ENCODE measurements at regions of chr3 and their contacts with region 1.

Region 1: DNA sequence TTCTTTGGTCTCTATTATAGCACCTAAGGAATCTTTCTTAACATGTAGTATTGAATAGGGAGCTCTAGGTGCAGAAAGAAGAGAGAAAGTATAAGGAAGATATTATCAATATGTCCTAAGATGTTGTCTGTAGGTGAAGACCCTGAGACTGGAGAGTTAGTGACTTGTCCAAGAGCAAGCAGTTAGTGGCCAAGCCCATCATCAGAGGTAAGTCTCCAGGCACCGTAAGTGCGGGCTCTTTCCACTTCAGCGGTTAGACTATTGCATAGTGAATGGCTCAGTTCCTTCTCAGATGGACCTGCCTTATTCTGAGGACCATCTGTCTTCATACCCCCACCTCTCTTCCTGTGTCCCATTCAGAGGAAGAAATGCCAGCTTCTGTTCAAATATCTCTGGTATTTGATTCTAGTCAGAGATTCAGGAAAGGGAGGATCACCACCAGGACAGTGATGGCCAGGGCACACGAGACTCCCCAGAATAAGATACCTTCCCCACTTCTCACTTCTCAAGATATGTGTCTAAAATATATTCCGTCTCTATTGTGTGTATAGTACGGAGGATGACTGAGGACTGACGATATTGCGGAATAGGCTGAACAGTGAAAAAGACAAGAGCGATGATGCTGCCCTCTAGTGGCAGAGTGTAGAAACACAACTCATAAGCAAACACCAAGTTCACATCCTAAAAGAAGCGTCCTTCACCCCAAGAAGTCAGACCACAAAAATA is 19.1 kb upstream of the ADGRG7 start:
- DNase-seq: peak; percentile 53
- H3K4me3 Mint-ChIP-seq: no peak overlapping the region
- H3K27ac Mint-ChIP-seq: no peak overlapping the region
- H3K4me1 Mint-ChIP-seq: peaks cover 9% of the 10 kb centered on the region
- H3K27me3 Mint-ChIP-seq: peaks cover 4% of the 10 kb centered on the region

Region 2: DNA sequence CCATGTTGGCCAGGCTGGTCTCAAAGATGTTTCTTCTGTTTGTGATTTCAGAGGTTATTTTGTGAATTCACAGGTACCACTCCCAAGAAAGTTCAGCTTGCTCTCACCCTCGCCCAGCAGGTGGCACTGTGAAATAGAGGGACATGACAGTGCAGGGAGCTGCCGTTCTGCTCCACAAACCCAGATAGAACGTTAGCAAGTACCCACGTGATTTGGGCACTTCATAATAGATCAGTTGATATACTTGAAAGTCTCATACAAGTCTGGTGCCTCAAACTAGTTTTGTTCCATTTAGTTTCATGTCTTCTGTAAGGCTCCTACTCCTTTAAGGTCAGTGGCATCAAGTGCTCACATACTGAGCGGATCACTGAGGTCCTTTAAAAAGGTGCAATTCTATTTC is 521.5 kb before region 1 on chr3:
- intact Hi-C with region 1: loop called (anchors 1 kb)
- DNase-seq: peak; percentile 73
- H3K4me3 Mint-ChIP-seq: no peak overlapping the region
- H3K27ac Mint-ChIP-seq: no peak overlapping the region
- H3K4me1 Mint-ChIP-seq: peaks cover 42% of the 10 kb centered on the region
- H3K27me3 Mint-ChIP-seq: no peaks in the 10 kb centered on the region

Region 3: DNA sequence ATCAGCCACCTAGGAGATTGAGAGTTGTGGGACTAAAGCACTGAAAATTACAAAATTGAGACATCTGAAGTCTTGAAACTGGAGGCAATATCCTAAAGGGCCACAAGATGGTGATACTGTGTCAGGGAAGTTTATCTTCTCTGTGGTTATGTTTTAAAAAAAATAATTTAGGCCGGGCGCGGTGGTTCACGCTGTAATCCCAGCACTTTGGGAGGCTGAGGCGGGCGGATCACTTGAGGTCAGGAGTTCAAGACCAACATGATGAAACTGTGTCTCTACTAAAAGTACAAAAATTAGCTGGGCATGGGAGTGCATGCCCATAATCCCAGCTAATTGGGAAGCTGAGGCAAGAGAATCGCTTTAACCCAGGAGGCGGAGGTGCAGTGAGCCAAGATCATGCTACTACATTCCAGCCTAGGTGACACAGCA is 273.6 kb before region 1 on chr3:
- intact Hi-C with region 1: loop called (anchors 1 kb)
- DNase-seq: peak; percentile 28
- H3K4me3 Mint-ChIP-seq: no peak overlapping the region
- H3K27ac Mint-ChIP-seq: peak overlapping the region; percentile 18
- H3K4me1 Mint-ChIP-seq: peaks cover 15% of the 10 kb centered on the region
- H3K27me3 Mint-ChIP-seq: no peaks in the 10 kb centered on the region

Region 4: GRCh38 chr3:100603469-100603868 is 13.2 kb after region 1 on chr3:
- intact Hi-C with region 1: loop called (anchors 1 kb)
- DNase-seq: no peak
- H3K4me3 Mint-ChIP-seq: peak overlapping the region; percentile 64
- H3K27ac Mint-ChIP-seq: peak overlapping the region; percentile 64
- H3K4me1 Mint-ChIP-seq: peaks cover 28% of the 10 kb centered on the region
- H3K27me3 Mint-ChIP-seq: peaks cover 7% of the 10 kb centered on the region

Region 5: DNA sequence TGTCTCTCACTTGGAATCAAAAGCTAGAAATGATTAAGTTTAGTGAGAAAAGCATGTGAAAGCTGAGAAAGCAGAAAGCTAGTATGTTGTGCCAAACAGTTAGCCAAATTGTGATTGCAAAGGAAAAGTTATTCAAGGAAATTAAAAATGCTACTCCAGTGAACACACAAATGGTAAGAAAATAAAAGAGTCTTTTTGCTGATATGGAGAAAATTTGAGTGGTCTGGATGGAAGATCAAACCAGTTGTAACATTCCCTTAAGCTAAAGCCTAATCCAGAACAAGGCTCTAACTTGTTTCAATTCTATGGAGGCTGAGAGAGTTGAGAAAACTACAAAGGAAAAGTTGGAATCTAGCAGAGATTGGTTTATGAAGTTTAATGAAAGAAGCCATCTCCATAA is 31.0 kb after region 1 on chr3:
- intact Hi-C with region 1: no loop called
- DNase-seq: no peak
- H3K4me3 Mint-ChIP-seq: no peak overlapping the region
- H3K27ac Mint-ChIP-seq: no peak overlapping the region
- H3K4me1 Mint-ChIP-seq: no peaks in the 10 kb centered on the region
- H3K27me3 Mint-ChIP-seq: peaks cover 17% of the 10 kb centered on the region

Measured in activated T-helper 1 cell treated with anti-CD3 and anti-CD28 coated beads, Interleukin-12 subunit alpha, Interleukin-12 subunit beta, Interleukin-2, Interleukin-4 antibody, amounts not matched to agents 30 ng/mL and 10 ng/mL and 1 ng/mL, durations not matched to agents 14 hours and 24 hours and 36 hours (primary cell).